CD4-positive, alpha-beta memory T cell (primary cell): ENCODE measurements at regions of chr3 and their contacts with region 1.

Region 1: GRCh38 chr3:45948311-45948781 is 5.1 kb downstream of the CXCR6 start:
- DNase-seq: no peak
- H3K4me3 ChIP-seq: no peak overlapping the region
- H3K4me3 Mint-ChIP-seq: peak overlapping the region in 5 of 8 donors; percentile 17 to 65 (median 22)
- H3K27ac ChIP-seq: no peak overlapping the region
- H3K27ac Mint-ChIP-seq: peak overlapping the region; percentile 35 to 83 (median 79)
- H3K4me1 ChIP-seq: peaks cover 87% of the 10 kb centered on the region
- H3K4me1 Mint-ChIP-seq: peaks cover 42 to 97% (median 74%) of the 10 kb centered on the region in 4 donors
- H3K27me3 ChIP-seq: no peaks in the 10 kb centered on the region
- H3K27me3 Mint-ChIP-seq: no peaks in the 10 kb centered on the region

Region 2: DNA sequence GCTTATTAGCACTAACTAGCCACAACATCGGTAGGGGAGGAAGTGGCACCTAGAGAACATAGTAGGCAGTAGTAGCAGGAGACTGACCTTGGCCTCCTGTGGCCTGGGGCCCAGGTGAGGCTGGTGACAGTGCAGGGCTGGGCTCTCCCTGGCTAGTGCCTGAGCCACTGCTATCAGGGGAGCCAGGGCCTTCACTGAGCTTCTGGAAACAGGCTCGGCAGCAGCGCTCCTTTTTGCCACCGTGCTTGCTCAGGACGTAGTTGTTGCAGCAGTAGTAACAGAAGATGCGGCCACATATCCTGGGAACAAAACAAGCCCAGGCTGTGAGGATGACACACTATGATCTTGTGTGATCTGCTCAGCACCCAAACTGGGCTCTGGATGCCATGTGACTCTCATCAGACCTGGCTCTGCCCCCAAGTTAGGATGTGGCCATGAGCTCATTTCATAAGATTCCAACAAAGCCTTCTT is 10.0 kb after region 1 on chr3:
- CTCF ChIA-PET with region 1: interaction called, 153 read pairs
- POLR2A ChIA-PET with region 1: interaction called, 90 read pairs
- intact Hi-C with region 1: no loop called
- DNase-seq: no peak
- H3K4me3 ChIP-seq: no peak overlapping the region
- H3K4me3 Mint-ChIP-seq: peak overlapping the region in 1 of 8 donors; percentile 25
- H3K27ac ChIP-seq: peak overlapping the region; percentile 4
- H3K27ac Mint-ChIP-seq: peak overlapping the region in 4 of 7 donors; percentile 3 to 66 (median 26)
- H3K4me1 ChIP-seq: peaks cover 25% of the 10 kb centered on the region
- H3K4me1 Mint-ChIP-seq: peaks cover 8 to 55% (median 33%) of the 10 kb centered on the region in 4 donors
- H3K27me3 ChIP-seq: no peaks in the 10 kb centered on the region
- H3K27me3 Mint-ChIP-seq: no peaks in the 10 kb centered on the region

Region 3: DNA sequence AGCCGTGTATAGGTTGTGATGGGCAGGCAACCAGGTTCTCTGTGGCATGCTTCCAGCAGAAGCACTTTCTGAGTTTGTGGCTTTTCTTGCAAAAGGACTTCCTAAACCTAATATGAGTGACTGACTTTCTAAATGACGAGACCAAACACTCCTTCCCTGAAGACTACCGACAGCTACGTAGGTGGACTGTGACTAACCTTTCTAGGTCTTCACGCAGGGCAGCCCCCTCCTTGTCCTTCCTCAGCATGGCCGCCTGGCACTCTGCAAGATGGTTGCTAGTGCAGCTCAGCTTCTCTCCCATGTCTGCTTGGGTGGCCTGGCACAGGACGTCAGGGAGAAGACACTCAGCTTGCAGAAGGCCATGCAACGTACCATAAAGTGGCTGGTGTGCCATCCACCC is 15.8 kb after region 1 on chr3:
- CTCF ChIA-PET with region 1: interaction called, 153 read pairs
- POLR2A ChIA-PET with region 1: interaction called, 90 read pairs
- intact Hi-C with region 1: loop called (anchors 1 kb)
- DNase-seq: peak in 1 of 5 donors; percentile 60
- H3K4me3 ChIP-seq: no peak overlapping the region
- H3K4me3 Mint-ChIP-seq: peak overlapping the region in 6 of 8 donors; percentile 11 to 73 (median 38)
- H3K27ac ChIP-seq: peak overlapping the region; percentile 26
- H3K27ac Mint-ChIP-seq: peak overlapping the region; percentile 41 to 88 (median 75)
- H3K4me1 ChIP-seq: peaks cover 64% of the 10 kb centered on the region
- H3K4me1 Mint-ChIP-seq: peaks cover 35 to 81% (median 61%) of the 10 kb centered on the region in 4 donors
- H3K27me3 ChIP-seq: no peaks in the 10 kb centered on the region
- H3K27me3 Mint-ChIP-seq: no peaks in the 10 kb centered on the region

Region 4: GRCh38 chr3:45972534-45973402 is 24.4 kb after region 1 on chr3:
- CTCF ChIA-PET with region 1: interaction called, 153 read pairs
- POLR2A ChIA-PET with region 1: interaction called, 90 read pairs
- intact Hi-C with region 1: loop called (anchors 5 kb)
- DNase-seq: no peak
- H3K4me3 ChIP-seq: no peak overlapping the region
- H3K4me3 Mint-ChIP-seq: peak overlapping the region in 4 of 8 donors; percentile 20 to 54 (median 28)
- H3K27ac ChIP-seq: no peak overlapping the region
- H3K27ac Mint-ChIP-seq: peak overlapping the region; percentile 63 to 90 (median 75)
- H3K4me1 ChIP-seq: peaks cover 75% of the 10 kb centered on the region
- H3K4me1 Mint-ChIP-seq: peaks cover 40 to 91% (median 66%) of the 10 kb centered on the region in 4 donors
- H3K27me3 ChIP-seq: no peaks in the 10 kb centered on the region
- H3K27me3 Mint-ChIP-seq: no peaks in the 10 kb centered on the region

Region 5: DNA sequence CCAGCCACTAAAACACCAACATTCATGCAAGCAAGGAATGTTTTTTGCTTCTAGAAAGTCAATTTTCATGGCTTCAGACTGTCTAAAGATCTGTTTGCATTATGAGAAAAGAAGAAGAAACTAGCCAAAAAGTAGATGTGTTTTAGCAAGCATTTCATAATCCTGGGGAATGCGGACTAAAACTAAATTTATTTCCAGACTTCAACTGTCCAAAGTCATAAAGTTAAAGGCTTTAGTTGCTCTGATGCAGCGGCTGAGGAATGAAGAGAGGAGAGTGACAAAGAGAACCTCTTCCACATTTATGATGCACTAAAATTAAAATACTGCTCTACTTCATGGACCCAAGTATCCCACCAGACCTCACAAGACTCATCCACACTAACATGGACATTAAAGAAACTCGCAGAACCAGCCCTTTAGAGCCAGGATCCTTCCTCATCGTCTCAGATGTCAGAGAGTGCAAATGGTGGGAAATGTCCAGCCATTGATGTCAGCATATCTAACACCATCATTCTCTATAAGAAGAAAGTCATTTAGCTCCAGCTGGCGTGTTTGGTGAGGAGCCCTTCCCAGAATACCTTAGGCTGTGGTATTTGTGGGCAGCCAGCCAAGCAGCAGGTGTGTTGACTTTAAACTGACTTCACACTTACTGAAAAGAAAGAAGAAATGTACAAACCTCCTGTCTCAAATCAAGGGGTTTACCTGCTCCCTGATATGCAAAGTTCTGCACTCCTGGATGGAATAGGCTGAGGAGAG is 29.8 kb after region 1 on chr3:
- CTCF ChIA-PET with region 1: interaction called, 10 read pairs
- POLR2A ChIA-PET with region 1: interaction called, 33 read pairs
- intact Hi-C with region 1: loop called (anchors 5 kb)
- DNase-seq: peak; percentile 38 to 73 (median 48)
- H3K4me3 ChIP-seq: peak overlapping the region in 1 of 2 donors; percentile 2
- H3K4me3 Mint-ChIP-seq: peak overlapping the region in 7 of 8 donors; percentile 38 to 93 (median 79)
- H3K27ac ChIP-seq: peak overlapping the region; percentile 10
- H3K27ac Mint-ChIP-seq: peak overlapping the region; percentile 31 to 99 (median 90)
- H3K4me1 ChIP-seq: peaks cover 91% of the 10 kb centered on the region
- H3K4me1 Mint-ChIP-seq: peaks cover 50 to 96% (median 74%) of the 10 kb centered on the region in 4 donors
- H3K27me3 ChIP-seq: no peaks in the 10 kb centered on the region
- H3K27me3 Mint-ChIP-seq: no peaks in the 10 kb centered on the region

Region 6: DNA sequence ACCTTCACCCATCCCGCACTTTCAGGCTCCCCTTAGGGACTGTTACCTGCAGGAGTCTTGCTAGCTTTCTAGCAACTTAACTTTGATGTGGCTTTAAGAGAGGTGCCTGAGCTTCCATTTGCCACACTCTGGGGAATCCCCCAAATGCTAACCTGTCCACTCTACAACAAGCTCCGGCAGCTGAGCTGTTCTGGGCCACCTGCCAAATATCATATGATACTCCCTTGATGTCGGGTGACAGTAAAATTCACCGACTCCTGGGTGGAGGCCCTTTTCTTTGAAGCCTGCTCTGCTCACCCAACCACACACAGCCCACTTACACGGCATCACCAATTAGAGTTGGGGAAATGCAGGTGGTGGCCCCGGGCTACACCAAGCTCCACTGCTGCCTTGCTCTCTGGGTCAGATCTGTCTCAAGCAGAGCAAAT is 117.0 kb after region 1 on chr3:
- CTCF ChIA-PET with region 1: interaction called, 7 read pairs
- POLR2A ChIA-PET with region 1: interaction called, 36 read pairs
- intact Hi-C with region 1: no loop called
- DNase-seq: peak; percentile 88 to 99 (median 93)
- H3K4me3 ChIP-seq: no peak overlapping the region
- H3K4me3 Mint-ChIP-seq: peak overlapping the region; percentile 58 to 86 (median 78)
- H3K27ac ChIP-seq: peak overlapping the region; percentile 47
- H3K27ac Mint-ChIP-seq: peak overlapping the region; percentile 86 to 96 (median 94)
- H3K4me1 ChIP-seq: peaks cover 77% of the 10 kb centered on the region
- H3K4me1 Mint-ChIP-seq: peaks cover 52 to 88% (median 68%) of the 10 kb centered on the region in 4 donors
- H3K27me3 ChIP-seq: no peaks in the 10 kb centered on the region
- H3K27me3 Mint-ChIP-seq: no peaks in the 10 kb centered on the region

Region 7: GRCh38 chr3:46070595-46071093 is 122.3 kb after region 1 on chr3:
- CTCF ChIA-PET with region 1: interaction called, 677 read pairs
- POLR2A ChIA-PET with region 1: interaction called, 36 read pairs
- intact Hi-C with region 1: no loop called
- DNase-seq: peak in 4 of 5 donors; percentile 47 to 56 (median 49)
- H3K4me3 ChIP-seq: no peak overlapping the region
- H3K4me3 Mint-ChIP-seq: peak overlapping the region in 6 of 8 donors; percentile 19 to 65 (median 51)
- H3K27ac ChIP-seq: peak overlapping the region; percentile 13
- H3K27ac Mint-ChIP-seq: peak overlapping the region; percentile 15 to 91 (median 73)
- H3K4me1 ChIP-seq: peaks cover 62% of the 10 kb centered on the region
- H3K4me1 Mint-ChIP-seq: peaks cover 52 to 68% (median 58%) of the 10 kb centered on the region in 4 donors
- H3K27me3 ChIP-seq: no peaks in the 10 kb centered on the region
- H3K27me3 Mint-ChIP-seq: no peaks in the 10 kb centered on the region